ENCODE measurements at regions of chr3 and their contacts with region 1.

Region 1: GRCh38 chr3:193572426-193572908 is 17.8 kb upstream of the ATP13A4 start:
- DNase-seq: peak; percentile 65
- ATAC-seq: peak; percentile 96
- H3K4me3 ChIP-seq: no peak overlapping the region
- H3K27ac ChIP-seq: no peak overlapping the region
- H3K4me1 ChIP-seq: peaks cover 0 to 2% of the 10 kb centered on the region in 2 experiments; a peak in 1 of 4 replicates
- H3K27me3 ChIP-seq: peaks cover 18% of the 10 kb centered on the region; the same call in 1 of the 2 replicates
- CTCF ChIP-seq: peak; percentile 73 to 92 (median 82); a peak in 5 of 6 replicates
- POLR2A ChIP-seq: no peak
- RAD21 ChIP-seq: peak; percentile 91

Region 2: DNA sequence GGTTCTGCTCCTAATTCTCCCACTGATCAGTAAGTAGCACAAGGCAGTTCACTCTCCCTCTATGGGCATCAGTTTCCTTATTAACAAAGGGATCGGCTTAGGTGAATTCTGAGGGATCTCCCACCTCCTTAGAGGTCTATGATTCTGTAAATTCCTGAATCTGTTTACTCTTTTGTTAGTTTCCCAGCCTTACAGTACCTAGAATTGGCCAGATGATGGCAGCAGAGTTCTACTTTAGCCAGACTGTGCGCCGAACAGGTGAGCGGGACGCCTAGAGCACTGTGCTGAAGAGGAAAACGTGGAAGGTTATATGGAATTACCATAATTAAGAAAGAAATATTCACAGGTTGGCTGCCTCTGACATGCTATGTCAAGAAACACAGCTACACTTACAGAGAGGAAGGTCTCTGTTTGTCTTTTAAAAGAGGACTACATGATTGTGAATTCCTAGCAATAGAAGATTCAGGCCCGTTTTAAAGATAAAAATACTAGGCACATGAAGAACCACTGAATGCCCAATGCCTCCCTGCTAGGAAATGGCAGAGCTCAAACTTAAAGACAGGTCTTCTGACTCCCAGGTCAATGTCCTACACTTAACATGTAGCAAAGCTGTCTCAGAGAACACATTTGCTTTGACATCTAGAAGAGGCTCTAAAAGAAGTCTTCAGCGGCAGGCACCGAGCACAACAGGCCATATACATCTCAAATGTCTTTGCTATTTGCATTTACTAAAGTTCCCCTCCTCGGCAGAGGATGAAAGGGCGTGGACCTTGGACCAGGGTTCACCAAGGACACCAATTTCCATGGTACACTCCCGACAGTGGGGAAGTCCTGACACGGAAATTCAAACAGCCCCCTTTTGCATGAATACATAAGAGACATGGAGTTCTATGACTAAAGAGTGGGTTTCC is 1105.0 kb before region 1 on chr3:
- CTCF ChIA-PET with region 1: no interaction called
- POLR2A ChIA-PET with region 1: no interaction called
- RAD21 ChIA-PET with region 1: no interaction called
- intact Hi-C with region 1: loop called (anchors 5 kb)
- DNase-seq: peak; percentile 37
- ATAC-seq: peak; percentile 97
- H3K4me3 ChIP-seq: no peak overlapping the region
- H3K27ac ChIP-seq: no peak overlapping the region
- H3K4me1 ChIP-seq: no peaks in the 10 kb centered on the region
- H3K27me3 ChIP-seq: peaks cover 56% of the 10 kb centered on the region
- CTCF ChIP-seq: peak; percentile 61 to 94 (median 81)
- POLR2A ChIP-seq: no peak
- RAD21 ChIP-seq: peak; percentile 86

Region 3: GRCh38 chr3:192566706-192567290 is 1005.7 kb before region 1 on chr3:
- CTCF ChIA-PET with region 1: interaction called, 3 read pairs
- POLR2A ChIA-PET with region 1: no interaction called
- RAD21 ChIA-PET with region 1: no interaction called
- intact Hi-C with region 1: loop called (anchors 5 kb)
- DNase-seq: peak; percentile 60
- ATAC-seq: peak; percentile 93
- H3K4me3 ChIP-seq: no peak overlapping the region
- H3K27ac ChIP-seq: no peak overlapping the region
- H3K4me1 ChIP-seq: no peaks in the 10 kb centered on the region
- H3K27me3 ChIP-seq: peaks cover 20% of the 10 kb centered on the region
- CTCF ChIP-seq: peak; percentile 48 to 96 (median 61)
- POLR2A ChIP-seq: no peak
- RAD21 ChIP-seq: peak; percentile 91

Region 4: GRCh38 chr3:193040836-193041672 is 531.4 kb before region 1 on chr3:
- CTCF ChIA-PET with region 1: no interaction called
- POLR2A ChIA-PET with region 1: no interaction called
- RAD21 ChIA-PET with region 1: no interaction called
- intact Hi-C with region 1: loop called (anchors 2 kb)
- DNase-seq: peak; percentile 50
- ATAC-seq: peak; percentile 83
- H3K4me3 ChIP-seq: no peak overlapping the region
- H3K27ac ChIP-seq: no peak overlapping the region
- H3K4me1 ChIP-seq: no peaks in the 10 kb centered on the region
- H3K27me3 ChIP-seq: no peaks in the 10 kb centered on the region
- CTCF ChIP-seq: peak; percentile 38 to 71 (median 65); a peak in 5 of 6 replicates
- POLR2A ChIP-seq: no peak
- RAD21 ChIP-seq: peak; percentile 85

Region 5: GRCh38 chr3:193134844-193135243 is 437.6 kb before region 1 on chr3:
- CTCF ChIA-PET with region 1: no interaction called
- POLR2A ChIA-PET with region 1: no interaction called
- RAD21 ChIA-PET with region 1: no interaction called
- intact Hi-C with region 1: loop called (anchors 5 kb)
- DNase-seq: no peak
- ATAC-seq: 0 out of 2 replicates have a peak, but pooled peaks have one; percentile 30
- H3K4me3 ChIP-seq: no peak overlapping the region
- H3K27ac ChIP-seq: no peak overlapping the region
- H3K4me1 ChIP-seq: no peaks in the 10 kb centered on the region
- H3K27me3 ChIP-seq: peaks cover 65% of the 10 kb centered on the region
- CTCF ChIP-seq: no peak
- POLR2A ChIP-seq: no peak
- RAD21 ChIP-seq: no peak

Region 6: DNA sequence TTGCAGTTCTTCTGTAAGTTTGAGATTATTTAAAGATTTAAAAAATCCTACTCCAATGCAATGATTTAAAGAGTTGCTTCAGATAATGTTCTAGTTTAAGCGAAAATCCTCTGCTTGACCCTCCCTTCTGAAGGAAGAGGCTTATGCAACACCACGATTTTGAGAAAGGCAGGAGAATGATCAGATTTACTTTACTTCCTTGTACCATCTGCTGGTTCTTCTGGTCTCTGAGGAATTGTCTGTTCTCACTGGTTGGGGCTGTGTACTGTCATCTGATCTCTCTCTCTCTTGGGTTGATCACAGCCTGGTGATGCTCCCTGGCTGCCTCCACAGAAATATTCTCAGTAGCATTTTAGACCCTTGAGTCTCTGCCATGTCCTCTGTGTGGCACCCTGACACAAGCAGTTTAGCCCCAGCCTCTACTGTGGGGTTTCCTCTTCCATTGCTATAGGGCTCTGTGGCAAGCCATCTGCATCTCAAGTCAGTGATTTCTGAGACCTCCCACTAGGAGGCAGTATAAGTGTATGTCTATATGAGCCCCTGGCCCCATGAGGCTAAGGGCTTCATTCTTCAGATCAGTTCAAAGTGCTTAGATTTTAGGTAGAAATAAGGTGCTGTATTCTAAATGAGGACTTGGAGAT is 382.2 kb before region 1 on chr3:
- CTCF ChIA-PET with region 1: interaction called, 3 read pairs
- POLR2A ChIA-PET with region 1: no interaction called
- RAD21 ChIA-PET with region 1: no interaction called
- intact Hi-C with region 1: loop called (anchors 2 kb)
- DNase-seq: peak; percentile 19
- ATAC-seq: peak; percentile 83
- H3K4me3 ChIP-seq: no peak overlapping the region
- H3K27ac ChIP-seq: no peak overlapping the region
- H3K4me1 ChIP-seq: no peaks in the 10 kb centered on the region
- H3K27me3 ChIP-seq: peaks cover 28% of the 10 kb centered on the region
- CTCF ChIP-seq: peak; percentile 18 to 56 (median 47); a peak in 3 of 6 replicates
- POLR2A ChIP-seq: no peak
- RAD21 ChIP-seq: peak; percentile 55

Region 7: DNA sequence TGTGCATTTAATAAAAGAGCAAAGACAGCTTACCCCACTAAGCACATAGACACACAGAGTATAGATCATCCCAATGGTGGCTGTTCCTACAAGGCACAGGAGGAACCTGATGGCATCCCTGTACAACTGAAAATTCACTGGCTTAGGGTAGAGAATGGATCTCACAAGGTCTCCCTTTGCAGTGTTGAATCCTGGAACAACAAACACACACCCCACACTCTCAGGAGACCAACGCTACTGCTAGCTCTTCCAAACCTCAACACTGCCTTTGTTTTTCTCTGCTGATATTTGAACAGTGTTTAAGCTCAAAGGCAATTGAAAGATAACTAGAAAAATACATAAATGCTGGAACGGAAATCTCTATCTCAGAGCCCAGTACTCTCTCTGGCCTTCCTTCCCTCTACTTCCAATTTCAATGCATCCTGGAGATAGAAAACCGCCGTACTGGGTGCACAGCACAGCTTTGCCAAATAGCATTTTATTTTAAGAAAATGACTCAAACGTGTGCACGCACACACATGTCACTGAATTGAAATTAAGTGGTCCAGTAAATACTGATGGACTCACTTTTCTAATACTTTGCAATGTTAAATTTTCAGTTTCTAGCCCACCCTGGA is 106.4 kb before region 1 on chr3:
- CTCF ChIA-PET with region 1: interaction called, 5 read pairs
- POLR2A ChIA-PET with region 1: no interaction called
- RAD21 ChIA-PET with region 1: no interaction called
- intact Hi-C with region 1: loop called (anchors 1 kb)
- DNase-seq: no peak
- ATAC-seq: no peak
- H3K4me3 ChIP-seq: no peak overlapping the region
- H3K27ac ChIP-seq: no peak overlapping the region
- H3K4me1 ChIP-seq: no peaks in the 10 kb centered on the region
- H3K27me3 ChIP-seq: peaks cover 41% of the 10 kb centered on the region
- CTCF ChIP-seq: no peak
- POLR2A ChIP-seq: no peak
- RAD21 ChIP-seq: no peak

Region 8: GRCh38 chr3:193640165-193640715 is 67.8 kb after region 1 on chr3:
- CTCF ChIA-PET with region 1: no interaction called
- POLR2A ChIA-PET with region 1: no interaction called
- RAD21 ChIA-PET with region 1: no interaction called
- intact Hi-C with region 1: no loop called
- DNase-seq: no peak
- ATAC-seq: no peak
- H3K4me3 ChIP-seq: no peak overlapping the region
- H3K27ac ChIP-seq: no peak overlapping the region
- H3K4me1 ChIP-seq: no peaks in the 10 kb centered on the region
- H3K27me3 ChIP-seq: no peaks in the 10 kb centered on the region
- CTCF ChIP-seq: no peak
- POLR2A ChIP-seq: no peak
- RAD21 ChIP-seq: no peak

Measured in HCT116 (cell line).